Thyroid gland (tissue), 4 donors: ENCODE measurements at regions of chr19 and their contacts with region 1.

Region 1: DNA sequence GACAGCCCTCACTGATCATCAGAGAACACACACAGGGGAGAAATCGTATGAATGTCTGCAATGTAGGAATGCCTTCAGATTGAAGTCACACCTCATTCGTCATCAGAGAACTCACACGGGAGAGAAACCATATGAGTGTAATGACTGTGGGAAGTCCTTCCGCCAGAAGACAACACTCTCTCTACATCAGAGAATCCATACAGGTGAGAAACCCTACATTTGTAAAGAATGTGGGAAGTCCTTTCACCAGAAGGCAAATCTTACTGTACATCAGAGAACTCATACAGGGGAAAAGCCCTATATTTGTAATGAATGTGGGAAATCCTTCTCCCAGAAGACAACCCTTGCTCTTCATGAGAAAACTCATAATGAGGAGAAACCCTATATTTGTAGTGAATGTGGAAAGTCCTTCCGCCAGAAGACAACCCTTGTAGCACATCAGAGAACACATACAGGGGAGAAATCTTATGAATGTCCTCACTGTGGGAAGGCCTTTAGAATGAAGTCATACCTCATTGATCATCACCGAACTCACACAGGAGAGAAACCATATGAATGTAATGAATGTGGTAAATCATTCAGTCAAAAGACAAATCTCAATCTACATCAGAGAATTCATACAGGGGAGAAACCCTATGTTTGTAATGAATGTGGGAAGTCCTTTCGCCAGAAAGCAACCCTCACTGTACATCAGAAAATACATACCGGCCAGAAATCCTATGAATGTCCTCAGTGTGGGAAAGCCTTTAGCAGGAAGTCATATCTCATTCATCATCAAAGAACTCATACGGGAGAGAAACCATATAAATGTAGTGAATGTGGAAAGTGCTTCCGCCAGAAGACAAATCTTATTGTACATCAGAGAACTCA is 32.5 kb downstream of the ZNF567 start:
- DNase-seq: no peak
- H3K4me3 ChIP-seq: no peak overlapping the region
- H3K27ac ChIP-seq: no peak overlapping the region
- H3K4me1 ChIP-seq: no peaks in the 10 kb centered on the region
- H3K27me3 ChIP-seq: no peaks in the 10 kb centered on the region
- CTCF ChIP-seq: no peak
- POLR2A ChIP-seq: no peak

Region 2: GRCh38 chr19:36340786-36341386 is 379.0 kb before region 1 on chr19:
- intact Hi-C with region 1: no loop called
- DNase-seq: no peak
- H3K4me3 ChIP-seq: no peak overlapping the region
- H3K27ac ChIP-seq: no peak overlapping the region
- H3K4me1 ChIP-seq: no peaks in the 10 kb centered on the region
- H3K27me3 ChIP-seq: no peaks in the 10 kb centered on the region
- CTCF ChIP-seq: no peak
- POLR2A ChIP-seq: no peak

Region 3: DNA sequence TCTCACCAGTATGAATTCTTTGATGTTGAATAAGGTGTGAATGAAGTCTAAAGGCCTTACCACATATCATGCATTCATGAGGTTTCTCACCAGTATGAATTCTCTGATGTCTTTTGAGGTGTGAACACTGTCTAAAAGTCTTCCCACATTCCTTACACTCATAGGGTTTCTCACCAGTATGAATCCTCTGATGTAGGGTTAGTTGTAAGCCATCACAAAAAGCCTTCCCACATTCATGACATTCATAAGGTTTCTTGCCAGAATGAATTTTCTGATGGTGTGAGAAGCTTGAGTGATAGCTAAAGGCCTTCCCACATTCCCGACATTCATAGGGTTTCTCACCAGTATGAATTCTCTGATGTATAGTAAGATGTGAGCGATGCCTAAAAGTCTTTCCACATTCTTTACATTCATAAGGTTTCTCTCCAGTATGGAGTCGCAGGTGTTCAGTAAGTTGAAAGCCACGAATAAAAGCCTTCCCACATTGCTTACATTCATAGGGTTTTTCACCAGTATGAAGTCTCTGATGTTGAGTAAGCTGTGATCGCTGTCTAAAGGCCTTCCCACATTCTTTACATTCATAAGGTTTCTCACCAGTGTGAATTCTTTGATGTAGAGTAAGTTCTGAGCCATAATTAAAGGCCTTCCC is 80.9 kb before region 1 on chr19:
- intact Hi-C with region 1: loop called (anchors 10 kb)
- DNase-seq: no peak
- H3K4me3 ChIP-seq: no peak overlapping the region
- H3K27ac ChIP-seq: no peak overlapping the region
- H3K4me1 ChIP-seq: no peaks in the 10 kb centered on the region
- H3K27me3 ChIP-seq: no peaks in the 10 kb centered on the region
- CTCF ChIP-seq: no peak
- POLR2A ChIP-seq: no peak

Region 4: DNA sequence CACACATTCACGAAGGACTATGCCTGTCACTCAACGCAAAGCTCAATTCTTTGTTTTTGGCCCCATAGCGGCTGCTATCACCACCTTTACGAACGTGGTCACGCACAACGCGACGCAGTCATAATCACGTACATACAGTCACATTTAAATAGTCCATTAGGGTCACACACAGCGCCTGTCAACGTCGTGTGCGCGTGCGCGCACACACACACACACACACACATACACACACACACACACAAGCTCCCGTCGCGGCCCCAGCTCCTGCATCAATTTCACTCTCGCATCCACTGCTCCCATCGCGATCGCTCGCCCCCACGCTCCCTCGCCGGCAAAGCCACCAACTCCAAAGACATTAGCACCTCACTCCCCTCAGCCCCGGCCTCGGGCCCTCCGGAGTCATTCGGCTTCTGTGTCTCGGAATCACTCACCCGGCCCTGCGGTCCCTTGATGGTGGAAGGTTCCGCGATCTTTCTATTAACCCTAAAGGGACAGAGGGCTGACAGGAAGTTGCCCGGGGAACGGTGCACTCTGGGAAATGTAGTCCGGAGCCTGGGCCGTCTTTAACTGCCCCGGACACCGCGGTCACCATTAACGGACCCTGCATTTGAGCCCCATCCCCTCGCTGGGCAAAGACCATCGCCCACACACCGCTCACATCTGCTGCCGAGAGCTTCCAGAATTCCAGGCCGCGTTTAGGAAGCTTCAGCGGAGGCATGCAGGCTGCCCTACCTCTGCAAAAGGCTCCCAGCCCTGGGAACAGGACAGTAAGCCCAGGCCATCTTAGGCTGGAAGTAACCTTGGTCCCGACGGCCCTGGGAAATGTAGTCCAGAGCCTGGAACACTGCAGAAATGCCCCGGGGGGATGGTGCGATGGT is 118.2 kb after region 1 on chr19 and contains the start of gene ZNF790:
- intact Hi-C with region 1: no loop called
- DNase-seq: peak; percentile 90 to 91
- H3K4me3 ChIP-seq: peak within 1 kb of the TSS; percentile 65 to 92 (median 89)
- H3K27ac ChIP-seq: peak within 1 kb of the TSS; percentile 79 to 92 (median 85)
- H3K4me1 ChIP-seq: peaks cover 9 to 11% of the 10 kb centered on the region in 2 donors
- H3K27me3 ChIP-seq: no peaks in the 10 kb centered on the region
- CTCF ChIP-seq: no peak
- POLR2A ChIP-seq: peak in 1 of 2 donors; percentile 39
- total RNA-seq, gene ZNF790: 9.8 to 18.7 (median 14.6) TPM

Region 5: DNA sequence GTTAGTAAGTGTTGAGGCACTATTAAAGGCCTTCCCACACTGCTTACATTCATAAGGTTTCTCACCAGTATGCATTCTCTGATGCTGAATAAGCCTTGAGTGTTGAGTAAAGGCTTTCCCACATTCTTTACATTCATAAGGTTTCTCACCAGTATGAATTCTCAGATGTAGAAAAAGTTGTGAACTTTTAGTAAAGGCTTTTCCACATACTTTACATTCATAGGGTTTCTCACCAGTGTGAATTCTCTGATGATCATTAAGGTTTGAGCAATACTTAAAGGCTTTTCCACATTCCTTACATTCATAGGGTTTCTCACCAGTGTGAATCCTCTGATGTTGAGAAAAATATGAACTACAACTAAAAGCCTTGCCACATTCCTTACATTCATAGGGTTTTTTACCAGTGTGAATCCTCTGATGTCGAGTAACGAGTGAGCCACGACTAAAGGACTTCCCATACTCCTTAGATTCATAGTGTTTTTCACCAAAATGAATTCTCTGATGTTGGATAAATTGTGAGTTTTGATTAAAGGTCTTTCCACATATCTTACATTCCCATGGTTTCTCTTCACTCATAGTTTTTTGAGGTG is 171.9 kb after region 1 on chr19:
- intact Hi-C with region 1: loop called (anchors 5 kb)
- DNase-seq: no peak
- H3K4me3 ChIP-seq: no peak overlapping the region
- H3K27ac ChIP-seq: no peak overlapping the region
- H3K4me1 ChIP-seq: no peaks in the 10 kb centered on the region
- H3K27me3 ChIP-seq: no peaks in the 10 kb centered on the region
- CTCF ChIP-seq: no peak
- POLR2A ChIP-seq: no peak

Region 6: GRCh38 chr19:36973021-36973843 is 253.3 kb after region 1 on chr19:
- intact Hi-C with region 1: no loop called
- DNase-seq: peak; percentile 88 to 91
- H3K4me3 ChIP-seq: peak overlapping the region; percentile 18 to 41 (median 36)
- H3K27ac ChIP-seq: peak overlapping the region; percentile 26 to 88 (median 70)
- H3K4me1 ChIP-seq: peaks cover 6 to 13% of the 10 kb centered on the region in 2 donors
- H3K27me3 ChIP-seq: no peaks in the 10 kb centered on the region
- CTCF ChIP-seq: peak; percentile 83 to 100 (median 98)
- POLR2A ChIP-seq: peak in 1 of 2 donors; percentile 53

Region 7: DNA sequence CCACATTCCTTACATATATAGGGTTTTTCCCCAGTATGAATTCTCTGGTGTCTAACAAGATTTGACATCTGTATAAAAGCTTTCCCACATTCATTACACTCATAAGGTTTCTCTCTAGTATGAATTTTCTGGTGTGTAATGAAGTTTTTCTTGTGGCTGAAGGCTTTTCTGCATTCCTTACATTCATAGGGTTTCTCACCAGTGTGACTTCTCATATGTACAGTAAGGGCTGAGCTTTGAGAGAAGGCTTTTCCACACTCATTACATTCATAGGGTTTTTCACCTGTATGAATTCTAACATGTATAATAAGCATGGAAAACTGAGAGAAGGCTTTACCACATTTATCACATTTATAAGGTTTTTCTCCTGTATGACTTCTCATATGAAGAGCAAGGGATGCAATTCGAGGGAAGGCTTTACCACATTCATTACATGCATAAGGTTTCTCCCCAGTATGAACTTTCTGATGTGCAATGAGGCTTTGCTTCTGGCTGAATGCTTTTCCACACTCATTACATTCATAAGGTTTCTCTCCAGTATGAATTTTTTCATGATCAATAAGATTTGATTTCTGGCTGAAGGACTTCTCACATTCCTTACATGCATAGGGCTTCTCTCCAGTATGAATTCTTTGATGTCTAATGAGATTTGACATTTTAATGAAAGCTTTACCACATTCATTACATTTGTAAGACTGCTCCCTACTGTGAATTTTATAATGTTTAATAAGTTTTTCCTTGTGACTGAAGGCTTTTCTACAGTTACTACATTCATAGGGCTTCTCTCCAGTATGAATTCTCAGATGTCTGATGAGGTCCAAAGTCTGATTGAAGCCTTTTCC is 693.5 kb after region 1 on chr19:
- intact Hi-C with region 1: loop called (anchors 10 kb)
- DNase-seq: no peak
- H3K4me3 ChIP-seq: no peak overlapping the region
- H3K27ac ChIP-seq: no peak overlapping the region
- H3K4me1 ChIP-seq: no peaks in the 10 kb centered on the region
- H3K27me3 ChIP-seq: no peaks in the 10 kb centered on the region
- CTCF ChIP-seq: no peak
- POLR2A ChIP-seq: no peak